ENCODE measurements at regions of chr5 and their contacts with region 1.

Region 1: DNA sequence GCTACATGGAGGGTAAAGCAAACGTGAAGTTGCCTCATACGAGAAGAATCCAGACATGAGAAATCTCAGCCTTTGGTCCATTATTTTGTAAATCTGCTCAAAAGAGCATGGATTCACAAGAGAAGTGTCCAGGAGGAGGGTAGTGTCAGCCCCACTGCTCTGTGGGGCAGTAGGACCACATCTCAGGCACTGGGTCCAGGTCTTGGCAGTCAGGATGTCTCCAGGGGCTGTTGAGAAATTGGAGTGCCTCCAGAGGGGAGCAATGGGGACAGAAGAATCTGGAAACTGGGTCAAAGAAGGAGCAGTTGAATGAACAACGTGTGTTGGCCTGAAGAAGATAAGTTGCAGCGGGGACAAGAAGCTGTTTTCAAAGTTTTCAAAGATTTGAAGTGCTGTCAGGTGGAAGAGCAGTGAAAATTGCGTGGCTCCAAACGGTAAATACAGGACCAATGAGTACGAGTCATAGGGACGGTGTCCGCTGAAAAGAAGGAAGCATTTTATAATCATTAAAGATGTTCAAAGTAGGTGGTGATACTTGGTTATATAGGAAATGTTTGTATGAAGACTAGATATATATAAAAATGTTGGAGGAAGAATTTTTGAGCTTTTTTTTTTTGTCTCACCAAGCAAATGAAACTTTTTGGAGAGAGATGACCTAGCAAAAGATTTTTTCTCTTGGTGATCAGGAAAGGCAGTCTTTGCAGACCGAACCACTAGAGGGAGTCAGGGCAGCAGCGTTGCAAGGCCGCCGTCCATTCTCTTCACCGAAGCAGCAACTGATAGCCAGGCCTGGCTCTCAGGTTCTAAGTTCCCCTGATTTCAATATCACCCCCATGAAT is 57.1 kb upstream of the ZBED3 start:
- H3K4me3 Mint-ChIP-seq: no peak overlapping the region
- H3K27ac Mint-ChIP-seq: peak overlapping the region; percentile 2
- H3K4me1 Mint-ChIP-seq: peaks cover 26% of the 10 kb centered on the region
- H3K27me3 Mint-ChIP-seq: no peaks in the 10 kb centered on the region

Region 2: DNA sequence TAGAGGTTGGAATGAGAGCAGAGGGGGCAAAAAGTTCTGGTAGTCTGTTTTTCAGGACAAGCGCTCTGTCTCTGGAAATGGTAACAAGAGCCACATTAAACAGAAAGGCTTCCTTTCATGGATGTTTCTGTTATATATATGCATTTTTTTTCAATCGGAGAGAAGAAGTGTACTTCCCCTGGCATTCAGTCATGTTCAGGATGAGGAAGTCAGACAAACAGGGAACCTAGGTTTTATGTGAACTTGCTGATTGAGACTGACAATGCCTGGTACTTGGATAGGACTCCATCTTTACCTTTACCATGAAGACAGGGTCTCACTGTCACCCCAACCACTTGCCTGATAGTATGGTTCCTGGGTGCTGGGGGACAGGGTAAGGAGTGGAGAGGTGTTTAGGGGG is 27.1 kb before region 1 on chr5:
- intact Hi-C with region 1: no loop called
- H3K4me3 Mint-ChIP-seq: no peak overlapping the region
- H3K27ac Mint-ChIP-seq: peak overlapping the region; percentile 59
- H3K4me1 Mint-ChIP-seq: peaks cover 18% of the 10 kb centered on the region
- H3K27me3 Mint-ChIP-seq: no peaks in the 10 kb centered on the region

Region 3: DNA sequence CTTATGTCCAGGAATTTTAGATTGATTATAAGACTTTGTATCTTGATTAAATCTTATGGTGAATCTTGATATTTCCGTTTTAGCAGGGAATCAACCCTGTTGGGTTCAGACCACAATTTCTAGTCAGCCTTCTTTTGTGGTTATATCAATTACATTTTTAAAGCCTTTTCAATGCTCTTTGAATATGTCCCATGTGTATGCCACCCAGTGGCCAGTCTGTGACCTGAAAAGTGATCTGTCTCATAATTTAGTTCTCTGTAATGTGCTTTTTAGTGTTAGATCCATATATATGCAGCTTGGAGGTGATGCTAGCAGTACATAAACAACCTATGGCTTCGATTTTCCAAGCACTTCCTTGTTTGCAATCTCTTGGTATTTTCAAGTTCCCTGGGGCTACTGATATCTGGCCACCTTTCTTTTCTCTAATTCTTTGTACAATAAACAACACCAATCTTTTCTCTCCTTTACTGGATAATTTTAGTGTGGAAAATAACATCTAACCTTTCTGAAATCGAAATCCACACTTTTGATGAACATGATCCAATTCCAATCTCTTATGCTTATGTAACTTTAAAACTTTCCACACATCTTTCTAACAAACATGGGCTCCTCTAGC is 95.0 kb after region 1 on chr5:
- intact Hi-C with region 1: loop called (anchors 2 kb)
- H3K4me3 Mint-ChIP-seq: no peak overlapping the region
- H3K27ac Mint-ChIP-seq: no peak overlapping the region
- H3K4me1 Mint-ChIP-seq: peaks cover 12% of the 10 kb centered on the region
- H3K27me3 Mint-ChIP-seq: no peaks in the 10 kb centered on the region

Region 4: DNA sequence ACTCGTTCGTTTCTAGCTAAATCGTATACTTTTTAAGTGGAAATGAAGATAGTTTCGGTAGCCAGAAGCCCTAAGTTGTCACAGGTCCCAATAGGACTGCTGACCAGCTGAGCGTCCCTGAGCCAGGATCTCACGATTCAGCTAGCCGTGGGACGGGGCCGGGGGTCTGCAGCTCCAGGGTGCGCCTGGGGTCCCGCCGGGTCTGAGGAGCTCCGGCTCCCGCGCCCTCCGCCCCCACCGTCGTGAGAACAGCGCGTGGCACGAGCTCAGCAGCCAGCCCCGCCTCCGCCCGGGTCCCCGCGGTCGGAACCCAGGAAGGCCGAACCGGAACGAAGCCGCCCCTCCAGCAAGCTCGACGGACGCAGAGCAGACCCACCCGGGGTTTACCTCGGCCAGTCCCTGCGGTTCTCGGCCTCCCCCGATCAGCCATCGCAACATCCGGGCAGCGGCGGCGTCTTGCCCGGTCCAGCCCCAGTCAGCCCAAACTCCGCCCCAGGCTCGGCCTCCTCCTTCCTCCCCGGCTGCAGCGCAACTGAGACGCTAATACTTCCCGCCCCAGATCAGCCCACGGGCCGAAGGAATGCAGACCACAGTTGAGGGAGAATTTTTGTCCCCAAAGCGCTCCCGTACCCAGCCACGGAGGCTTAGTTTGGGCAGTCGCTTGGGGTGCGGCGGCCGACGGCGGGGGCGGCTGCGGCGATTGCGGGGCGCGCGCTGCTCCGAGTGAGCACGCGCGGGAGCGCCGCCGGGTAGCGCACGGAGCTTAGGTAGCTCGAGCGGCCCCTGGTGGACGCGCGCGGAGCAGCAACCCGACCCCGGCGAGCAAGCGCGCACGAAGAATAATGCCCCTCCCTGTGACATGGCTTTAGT is 347.8 kb after region 1 on chr5 and contains the start of gene WDR41:
- intact Hi-C with region 1: loop called (anchors 2 kb)
- H3K4me3 Mint-ChIP-seq: peak within 1 kb of the TSS; percentile 84
- H3K27ac Mint-ChIP-seq: peak within 1 kb of the TSS; percentile 93
- H3K4me1 Mint-ChIP-seq: peaks cover 14% of the 10 kb centered on the region
- H3K27me3 Mint-ChIP-seq: no peaks in the 10 kb centered on the region